ENCODE measurements at regions of chr22 and their contacts with region 1.

Region 1: DNA sequence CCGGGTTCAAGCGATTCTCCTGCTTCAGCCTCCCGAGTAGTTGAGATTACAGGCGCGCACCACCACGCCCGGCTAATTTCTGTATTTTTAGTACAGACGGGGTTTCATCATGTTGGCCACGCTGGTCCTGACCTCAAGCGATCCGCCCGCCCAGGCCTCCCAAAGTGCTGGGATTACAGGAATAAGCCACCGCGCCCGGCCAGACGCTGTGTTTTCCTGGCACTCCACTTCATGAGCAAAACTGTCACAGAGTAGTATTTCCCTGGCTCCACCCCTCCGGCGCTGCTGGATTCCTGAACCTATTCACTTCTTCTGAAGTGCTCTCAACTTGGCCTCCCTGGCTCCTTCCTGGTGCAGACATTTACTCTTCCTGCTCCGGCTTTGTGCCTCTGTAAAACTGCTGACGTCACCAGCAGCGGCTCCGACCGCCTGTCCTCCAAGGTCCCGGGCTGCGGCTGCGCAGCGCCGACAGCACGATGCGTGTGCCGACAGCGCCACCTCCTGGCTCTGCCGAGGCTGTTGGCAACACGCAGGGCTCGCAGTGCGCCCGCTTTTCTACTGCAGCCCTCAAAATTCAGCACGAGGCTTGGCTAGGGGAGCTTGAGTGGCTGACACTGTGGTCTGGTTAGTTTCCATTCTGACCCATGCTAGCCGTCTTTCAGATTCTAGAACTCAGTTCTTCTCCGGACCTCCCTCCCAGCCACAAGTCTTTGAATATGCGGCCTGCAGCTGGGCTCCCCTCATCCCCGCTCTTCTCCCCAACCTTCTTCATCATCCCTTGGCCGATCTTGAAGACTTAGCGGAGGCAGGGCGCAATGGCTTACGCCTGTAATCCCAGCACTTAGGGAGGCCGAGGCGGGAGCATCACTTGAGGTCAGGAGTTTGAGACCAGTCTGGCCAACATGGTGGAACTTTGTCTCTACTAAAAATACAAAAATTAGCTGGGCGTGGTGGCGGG is 36.6 kb downstream of the APOL3 start:
- DNase-seq: peak; percentile 95
- H3K4me3 ChIP-seq: no peak overlapping the region
- H3K27ac ChIP-seq: no peak overlapping the region
- H3K4me1 ChIP-seq: peaks cover 3% of the 10 kb centered on the region
- CTCF ChIP-seq: peak; percentile 99

Region 2: DNA sequence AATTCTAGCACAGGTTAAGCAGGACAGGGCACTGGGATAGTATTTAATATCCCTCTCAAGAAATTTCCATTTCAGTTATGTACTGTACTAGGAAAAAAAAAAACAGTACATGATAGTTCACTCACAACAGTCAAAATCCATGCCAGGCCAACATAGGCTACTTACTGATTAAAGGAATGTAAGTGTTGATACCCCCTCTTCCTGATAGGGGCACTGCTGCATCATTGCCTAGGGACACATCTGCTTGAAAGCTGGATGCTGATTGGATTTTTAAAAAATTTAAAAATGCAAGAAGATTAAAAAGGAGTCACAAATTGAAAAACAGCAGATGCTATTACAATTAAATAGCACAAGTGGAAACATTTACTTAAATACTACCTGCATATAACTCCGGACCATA is 362.9 kb before region 1 on chr22:
- CTCF ChIA-PET with region 1: no interaction called
- POLR2A ChIA-PET with region 1: no interaction called
- intact Hi-C with region 1: loop called (anchors 10 kb)
- DNase-seq: no peak
- H3K4me3 ChIP-seq: no peak overlapping the region
- H3K27ac ChIP-seq: no peak overlapping the region
- H3K4me1 ChIP-seq: peaks cover 29% of the 10 kb centered on the region
- CTCF ChIP-seq: peak; percentile 78